ENCODE measurements at regions of chr17 and their contacts with region 1.

Region 1: DNA sequence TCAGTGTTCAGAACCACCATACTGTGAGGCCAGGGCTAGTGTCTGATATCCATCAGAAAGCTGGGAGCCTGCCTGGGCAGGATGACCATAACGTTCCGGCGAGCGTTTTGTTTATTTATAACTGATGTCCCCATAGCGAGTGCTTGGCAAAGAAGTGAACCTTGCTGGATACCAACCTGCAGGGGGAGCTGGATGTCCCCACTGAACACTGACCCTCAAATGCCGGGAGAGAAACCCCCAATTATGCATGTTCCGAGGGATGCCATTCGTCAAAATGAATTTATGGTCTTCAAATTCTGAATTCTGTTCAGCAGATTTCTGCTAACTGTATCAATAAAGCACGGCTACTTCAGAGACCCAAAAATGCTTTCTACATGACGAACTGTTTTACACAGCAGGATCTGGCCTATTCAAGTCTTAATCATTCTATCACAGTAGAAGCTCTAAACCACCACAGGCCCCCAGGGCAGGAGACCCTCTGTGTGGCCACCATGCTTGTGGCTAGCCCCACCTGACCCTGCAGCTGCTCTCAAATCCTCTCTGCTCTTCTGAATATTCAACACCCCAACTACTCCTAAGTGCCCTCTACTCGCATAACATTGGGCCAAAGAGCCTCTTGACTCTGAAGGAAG is 15.2 kb downstream of the MED24 start:
- DNase-seq: peak; percentile 69 to 86 (median 82)
- ATAC-seq: peak; percentile 95 to 98 (median 96)
- H3K4me3 ChIP-seq: peak overlapping the region in 2 of 12 donors; percentile 9 to 16
- H3K27ac ChIP-seq: peak overlapping the region; percentile 38 to 88 (median 77)
- H3K4me1 ChIP-seq: peaks cover 0 to 26% (median 12%) of the 10 kb centered on the region in 12 donors
- H3K27me3 ChIP-seq: no peaks in the 10 kb centered on the region
- CTCF ChIP-seq: peak; percentile 49 to 85 (median 76)
- POLR2A ChIP-seq: no peak

Region 2: DNA sequence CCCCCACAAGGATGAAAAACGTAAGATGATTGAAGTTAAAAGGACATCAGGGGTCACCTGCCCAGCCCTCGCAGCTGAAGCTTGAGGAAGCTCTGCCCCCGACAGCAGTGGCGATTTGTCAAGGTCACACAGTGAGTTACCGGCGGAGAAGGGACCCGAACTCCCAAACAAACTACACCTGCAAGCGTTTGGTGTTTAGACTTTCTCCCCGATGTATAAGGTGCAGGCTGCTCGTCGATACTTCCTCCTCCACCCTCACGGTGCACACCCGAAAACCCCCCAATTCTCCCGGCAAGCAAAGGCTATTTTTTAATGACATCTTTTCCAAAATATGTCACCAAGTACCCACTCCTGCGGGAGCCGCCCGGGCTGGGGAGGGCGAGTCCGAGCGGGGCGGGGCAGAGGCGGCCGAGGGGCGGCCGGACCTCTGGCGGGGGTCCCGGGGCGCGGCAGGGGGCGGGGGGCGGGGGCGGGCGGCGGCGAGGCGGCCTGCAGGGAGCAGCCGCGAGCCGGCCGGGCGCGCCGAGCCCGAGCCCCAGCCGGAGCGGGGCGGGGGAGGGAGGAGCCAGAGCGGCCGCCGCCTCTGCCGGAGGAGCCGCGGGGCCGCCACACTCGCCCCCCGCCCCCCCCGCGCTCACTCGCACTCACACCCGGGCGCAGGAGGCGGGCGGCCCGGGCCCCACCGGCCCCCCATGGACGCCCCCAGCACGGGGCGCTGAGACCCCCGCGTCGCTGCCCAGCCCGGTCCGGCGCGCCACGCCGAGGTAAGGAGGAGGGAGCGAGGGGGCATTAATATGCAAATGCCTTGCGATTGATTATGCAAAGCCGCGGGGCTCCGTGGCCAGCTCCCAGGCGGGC is 23.6 kb after region 1 on chr17 and contains the start of gene THRA:
- intact Hi-C with region 1: loop called in 1 of 10 experiments (anchors 1 kb)
- DNase-seq: peak; percentile 74 to 89 (median 86)
- ATAC-seq: peak; percentile 19 to 82 (median 74)
- H3K4me3 ChIP-seq: peak within 1 kb of the TSS; percentile 78 to 100 (median 96)
- H3K27ac ChIP-seq: peak within 1 kb of the TSS; percentile 95 to 100 (median 98)
- H3K4me1 ChIP-seq: peaks cover 3 to 61% (median 48%) of the 10 kb centered on the region in 12 donors
- H3K27me3 ChIP-seq: no peaks in the 10 kb centered on the region
- CTCF ChIP-seq: peak in 3 of 12 donors; percentile 17 to 30 (median 30)
- POLR2A ChIP-seq: no peak
- total RNA-seq, gene THRA: 63.2 to 105 (median 73.2) TPM

Region 3: GRCh38 chr17:40075201-40075941 is 36.4 kb after region 1 on chr17:
- intact Hi-C with region 1: loop called in 5 of 10 experiments (anchors 5 to 10 kb)
- DNase-seq: peak; percentile 78 to 94 (median 90)
- ATAC-seq: peak; percentile 66 to 72 (median 68)
- H3K4me3 ChIP-seq: peak overlapping the region in 8 of 12 donors; percentile 2 to 27 (median 18)
- H3K27ac ChIP-seq: peak overlapping the region; percentile 62 to 100 (median 95)
- H3K4me1 ChIP-seq: peaks cover 31 to 77% (median 68%) of the 10 kb centered on the region in 12 donors
- H3K27me3 ChIP-seq: no peaks in the 10 kb centered on the region
- CTCF ChIP-seq: peak; percentile 76 to 90 (median 84)
- POLR2A ChIP-seq: no peak

Region 4: GRCh38 chr17:40086150-40087044 is 47.4 kb after region 1 on chr17:
- intact Hi-C with region 1: loop called in 4 of 10 experiments (anchors 2 to 10 kb)
- DNase-seq: peak in 4 of 5 donors; percentile 59 to 82 (median 69)
- ATAC-seq: peak in 3 of 4 donors; percentile 7 to 38 (median 35)
- H3K4me3 ChIP-seq: no peak overlapping the region
- H3K27ac ChIP-seq: peak overlapping the region in 4 of 12 donors; percentile 4 to 66 (median 23)
- H3K4me1 ChIP-seq: peaks cover 0 to 31% (median 16%) of the 10 kb centered on the region in 12 donors
- H3K27me3 ChIP-seq: no peaks in the 10 kb centered on the region
- CTCF ChIP-seq: peak; percentile 75 to 91 (median 86)
- POLR2A ChIP-seq: no peak

Region 5: DNA sequence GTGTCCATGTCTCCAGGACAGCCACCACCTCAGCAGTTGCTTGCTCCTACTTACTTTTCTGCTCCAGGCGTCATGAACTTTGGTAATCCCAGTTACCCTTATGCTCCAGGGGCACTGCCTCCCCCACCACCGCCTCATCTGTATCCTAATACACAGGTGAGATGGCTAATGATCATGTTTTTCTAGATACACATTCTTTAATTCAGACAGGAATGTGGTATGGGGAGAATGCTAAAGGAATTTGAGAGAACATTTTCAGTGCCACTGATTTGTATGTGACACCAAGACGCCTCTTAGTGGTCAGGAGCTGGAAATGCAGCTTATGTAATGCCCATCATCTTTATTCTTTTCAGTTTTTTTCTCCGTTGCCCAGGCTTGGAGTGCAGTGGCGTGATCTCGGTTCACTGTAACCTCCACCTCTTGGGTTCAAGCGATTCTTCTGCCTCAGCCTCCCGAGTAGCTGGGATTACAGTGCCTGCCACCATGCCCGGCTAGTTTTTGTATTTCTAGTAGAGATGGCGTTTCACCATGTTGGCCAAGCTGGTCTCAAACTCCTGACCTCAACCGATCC is 129.3 kb after region 1 on chr17:
- intact Hi-C with region 1: loop called in 2 of 10 experiments (anchors 5 kb)
- DNase-seq: peak in 1 of 5 donors; percentile 32
- ATAC-seq: peak; percentile 32 to 69 (median 59)
- H3K4me3 ChIP-seq: no peak overlapping the region
- H3K27ac ChIP-seq: peak overlapping the region in 7 of 12 donors; percentile 8 to 63 (median 23)
- H3K4me1 ChIP-seq: peaks cover 0 to 9% (median 4%) of the 10 kb centered on the region in 12 donors
- H3K27me3 ChIP-seq: no peaks in the 10 kb centered on the region
- CTCF ChIP-seq: peak; percentile 67 to 86 (median 80)
- POLR2A ChIP-seq: no peak

Measured in heart left ventricle (tissue), 16 donors.